ENCODE measurements at regions of chr3 and their contacts with region 1.

Region 1: GRCh38 chr3:32177702-32178198 is 60.7 kb upstream of the CMTM8 start:
- DNase-seq: peak; percentile 67 to 69
- H3K4me3 ChIP-seq: no peak overlapping the region
- H3K27ac ChIP-seq: no peak overlapping the region
- H3K4me1 ChIP-seq: no peaks in the 10 kb centered on the region
- H3K27me3 ChIP-seq: no peaks in the 10 kb centered on the region
- CTCF ChIP-seq: peak; percentile 58

Region 2: DNA sequence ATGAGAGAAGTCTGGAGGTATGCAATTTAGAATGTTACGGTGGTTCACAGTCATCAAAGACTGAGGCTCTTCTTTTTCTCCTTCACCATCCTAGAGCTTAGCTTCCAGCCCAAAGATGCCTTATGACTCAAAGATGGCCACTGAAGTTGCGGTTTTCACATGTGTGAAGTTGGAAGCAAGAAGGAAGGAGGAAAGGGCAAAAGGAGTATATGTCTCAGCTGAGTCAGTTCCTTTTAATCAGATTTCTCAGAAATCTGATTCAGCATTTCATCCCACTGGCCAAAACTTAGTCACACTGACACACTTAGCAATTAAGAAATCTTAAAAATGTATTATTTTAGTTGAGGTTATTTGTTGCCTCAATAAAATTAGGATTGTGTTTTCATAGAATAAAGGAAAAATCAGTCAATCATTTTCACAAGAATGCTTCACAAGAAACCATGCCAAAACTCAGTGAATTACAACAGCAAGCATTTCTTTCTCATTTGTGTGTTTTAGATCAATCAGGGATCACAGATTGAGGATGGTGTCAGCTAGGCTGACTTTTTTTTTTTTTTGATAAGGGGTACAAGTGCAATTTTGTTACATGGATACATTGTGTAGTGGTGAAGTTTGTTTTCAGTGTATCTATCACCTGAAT is 1072.2 kb before region 1 on chr3:
- CTCF ChIA-PET with region 1: interaction called, 10 read pairs
- POLR2A ChIA-PET with region 1: no interaction called
- intact Hi-C with region 1: no loop called
- DNase-seq: peak in 1 of 2 experiments; percentile 5
- H3K4me3 ChIP-seq: no peak overlapping the region
- H3K27ac ChIP-seq: no peak overlapping the region
- H3K4me1 ChIP-seq: no peaks in the 10 kb centered on the region
- H3K27me3 ChIP-seq: no peaks in the 10 kb centered on the region
- CTCF ChIP-seq: no peak

Region 3: GRCh38 chr3:32283304-32283703 is 105.6 kb after region 1 on chr3:
- CTCF ChIA-PET with region 1: no interaction called
- POLR2A ChIA-PET with region 1: no interaction called
- intact Hi-C with region 1: loop called (anchors 5 kb)
- DNase-seq: no peak
- H3K4me3 ChIP-seq: no peak overlapping the region
- H3K27ac ChIP-seq: no peak overlapping the region
- H3K4me1 ChIP-seq: peaks cover 14% of the 10 kb centered on the region
- H3K27me3 ChIP-seq: no peaks in the 10 kb centered on the region
- CTCF ChIP-seq: no peak

Region 4: GRCh38 chr3:32340039-32340438 is 162.3 kb after region 1 on chr3:
- CTCF ChIA-PET with region 1: interaction called, 3 read pairs
- POLR2A ChIA-PET with region 1: no interaction called
- intact Hi-C with region 1: loop called (anchors 1 kb)
- DNase-seq: no peak
- H3K4me3 ChIP-seq: no peak overlapping the region
- H3K27ac ChIP-seq: no peak overlapping the region
- H3K4me1 ChIP-seq: no peaks in the 10 kb centered on the region
- H3K27me3 ChIP-seq: no peaks in the 10 kb centered on the region
- CTCF ChIP-seq: peak; percentile 44

Region 5: DNA sequence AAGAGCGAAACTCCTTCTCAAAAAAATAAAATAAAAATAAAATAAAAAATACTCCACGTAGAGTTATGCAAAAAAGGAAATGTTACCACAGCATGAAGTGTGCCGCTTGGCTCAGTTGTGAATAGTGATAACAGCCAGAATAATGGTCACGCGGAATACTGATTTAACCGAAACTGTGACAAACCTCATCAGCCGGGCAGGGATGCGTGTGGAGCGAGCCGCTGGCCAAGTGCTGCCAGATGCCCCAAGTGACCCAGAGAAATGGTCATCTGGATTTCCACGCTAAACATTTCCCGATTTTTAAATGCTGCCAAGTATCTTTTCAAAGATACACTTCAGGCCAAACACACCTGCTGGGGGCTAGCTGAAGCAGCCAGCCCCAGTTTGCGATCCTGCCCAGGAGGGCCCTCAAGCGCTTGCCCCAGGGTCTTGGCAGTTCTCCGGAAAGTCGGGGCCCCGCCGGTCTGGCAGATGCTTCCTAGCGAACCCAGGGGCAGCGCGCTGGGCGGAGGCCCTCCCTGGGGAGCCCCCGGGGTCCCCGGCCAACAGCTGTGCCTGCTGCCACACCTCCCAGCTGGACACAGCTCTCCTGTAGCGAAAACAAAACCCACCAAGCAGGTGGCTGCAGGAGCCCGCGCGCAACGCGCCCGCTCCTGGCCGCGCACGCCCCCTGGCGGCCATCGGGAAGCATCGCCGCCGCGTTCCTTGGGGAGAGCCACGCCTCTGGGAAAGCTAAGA is 289.8 kb after region 1 on chr3:
- CTCF ChIA-PET with region 1: interaction called, 5 read pairs
- POLR2A ChIA-PET with region 1: no interaction called
- intact Hi-C with region 1: loop called (anchors 1 kb)
- DNase-seq: peak; percentile 42 to 73
- H3K4me3 ChIP-seq: no peak overlapping the region
- H3K27ac ChIP-seq: no peak overlapping the region
- H3K4me1 ChIP-seq: peaks cover 21% of the 10 kb centered on the region
- H3K27me3 ChIP-seq: no peaks in the 10 kb centered on the region
- CTCF ChIP-seq: peak; percentile 80

Region 6: GRCh38 chr3:32934150-32934742 is 756.5 kb after region 1 on chr3:
- CTCF ChIA-PET with region 1: no interaction called
- POLR2A ChIA-PET with region 1: no interaction called
- intact Hi-C with region 1: loop called (anchors 2 kb)
- DNase-seq: peak in 1 of 2 experiments; percentile 9
- H3K4me3 ChIP-seq: no peak overlapping the region
- H3K27ac ChIP-seq: no peak overlapping the region
- H3K4me1 ChIP-seq: no peaks in the 10 kb centered on the region
- H3K27me3 ChIP-seq: no peaks in the 10 kb centered on the region
- CTCF ChIP-seq: peak; percentile 64